Mammary epithelial cell (primary cell): ENCODE measurements at regions of chr12 and their contacts with region 1.

Region 1: DNA sequence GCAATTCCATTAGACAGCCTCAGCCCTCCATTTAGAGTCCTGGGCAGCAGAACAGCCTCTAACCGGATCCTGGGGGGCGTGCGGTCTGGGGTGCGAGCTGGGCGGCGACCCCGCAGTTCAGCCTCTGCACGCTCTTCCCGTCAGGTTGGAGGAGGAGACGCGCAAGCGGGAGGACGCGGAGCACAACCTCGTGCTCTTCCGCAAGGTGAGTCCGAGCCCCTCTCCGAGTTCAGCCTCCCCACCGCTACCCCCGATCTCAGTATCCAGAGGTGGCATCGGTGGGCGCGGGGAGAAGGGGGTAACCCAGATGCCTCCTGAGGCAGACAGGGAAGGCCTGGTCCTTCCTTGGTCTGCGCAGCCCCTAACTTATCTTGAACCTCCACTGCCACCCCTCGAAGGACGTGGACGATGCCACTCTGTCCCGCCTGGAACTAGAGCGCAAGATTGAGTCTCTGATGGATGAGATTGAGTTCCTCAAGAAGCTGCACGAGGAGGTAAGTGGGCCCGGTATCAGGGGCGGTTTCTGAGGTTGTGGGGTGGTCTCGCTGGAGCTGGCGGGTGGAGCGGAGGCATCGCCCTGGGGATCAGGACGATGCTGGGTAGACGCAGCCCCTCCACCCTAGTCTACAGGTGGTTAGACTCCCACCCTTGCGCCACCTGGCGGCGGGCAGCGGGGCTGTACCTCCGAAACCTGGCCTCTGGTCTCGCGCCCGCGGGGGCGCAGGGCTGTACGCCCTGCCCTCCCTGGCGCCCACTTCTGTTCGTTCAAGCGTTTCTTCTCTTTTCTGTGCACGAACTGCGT is 1.3 kb downstream of the PRPH start:
- DNase-seq: no peak
- H3K4me3 ChIP-seq: peak overlapping the region in 2 of 3 experiments; percentile 30 to 41
- H3K27ac ChIP-seq: no peak overlapping the region
- H3K4me1 ChIP-seq: peaks cover 11% of the 10 kb centered on the region
- H3K27me3 ChIP-seq: peaks cover 12% of the 10 kb centered on the region
- CTCF ChIP-seq: peak; percentile 57 to 75

Region 2: GRCh38 chr12:48814262-48815125 is 481.7 kb before region 1 on chr12:
- CTCF ChIA-PET with region 1: no interaction called
- dilution Hi-C with region 1: no loop called
- in situ Hi-C with region 1: no loop called
- intact Hi-C with region 1: no loop called
- DNase-seq: peak; percentile 73
- H3K4me3 ChIP-seq: peak overlapping the region; percentile 77 to 92 (median 92)
- H3K27ac ChIP-seq: peak overlapping the region; percentile 16
- H3K4me1 ChIP-seq: peaks cover 28% of the 10 kb centered on the region
- H3K27me3 ChIP-seq: no peaks in the 10 kb centered on the region
- CTCF ChIP-seq: peak; percentile 95 to 98

Region 3: GRCh38 chr12:49264738-49265515 is 31.3 kb before region 1 on chr12 and contains the start of gene TUBA1C:
- CTCF ChIA-PET with region 1: interaction called, 40 read pairs
- dilution Hi-C with region 1: no loop called
- in situ Hi-C with region 1: no loop called
- intact Hi-C with region 1: loop called (anchors 2 kb)
- DNase-seq: peak; percentile 95
- H3K4me3 ChIP-seq: peak within 1 kb of the TSS; percentile 75 to 99 (median 89)
- H3K27ac ChIP-seq: peak within 1 kb of the TSS; percentile 94
- H3K4me1 ChIP-seq: peaks cover 46% of the 10 kb centered on the region
- H3K27me3 ChIP-seq: no peaks in the 10 kb centered on the region
- CTCF ChIP-seq: no peak
- total RNA-seq, gene TUBA1C: 455 to 532 TPM

Region 4: DNA sequence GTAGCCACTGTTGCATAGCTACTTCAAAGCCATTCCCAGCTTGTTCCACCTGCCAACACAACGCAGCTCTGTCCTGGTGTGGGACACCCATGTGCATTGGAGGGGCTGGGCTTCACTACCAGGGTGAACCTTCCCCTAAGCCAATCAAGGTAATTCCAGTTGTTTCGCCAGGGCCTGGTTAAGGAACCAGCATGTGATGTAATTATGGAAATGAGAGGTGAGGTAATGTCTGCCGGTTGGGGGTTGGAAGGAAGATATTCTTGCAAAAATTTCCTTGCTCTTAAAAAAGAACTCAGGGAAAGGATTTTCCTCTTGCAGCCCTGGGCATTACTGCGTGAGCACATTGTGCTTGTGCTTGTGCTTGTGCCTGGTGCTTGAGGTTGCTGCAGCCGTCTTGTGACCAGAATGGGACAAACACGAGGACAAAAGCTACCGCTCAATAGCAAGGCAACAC is 16.5 kb before region 1 on chr12:
- CTCF ChIA-PET with region 1: interaction called, 4 read pairs
- dilution Hi-C with region 1: no loop called
- in situ Hi-C with region 1: no loop called
- intact Hi-C with region 1: loop called (anchors 1 kb)
- DNase-seq: no peak
- H3K4me3 ChIP-seq: no peak overlapping the region
- H3K27ac ChIP-seq: no peak overlapping the region
- H3K4me1 ChIP-seq: peaks cover 3% of the 10 kb centered on the region
- H3K27me3 ChIP-seq: no peaks in the 10 kb centered on the region
- CTCF ChIP-seq: no peak

Region 5: DNA sequence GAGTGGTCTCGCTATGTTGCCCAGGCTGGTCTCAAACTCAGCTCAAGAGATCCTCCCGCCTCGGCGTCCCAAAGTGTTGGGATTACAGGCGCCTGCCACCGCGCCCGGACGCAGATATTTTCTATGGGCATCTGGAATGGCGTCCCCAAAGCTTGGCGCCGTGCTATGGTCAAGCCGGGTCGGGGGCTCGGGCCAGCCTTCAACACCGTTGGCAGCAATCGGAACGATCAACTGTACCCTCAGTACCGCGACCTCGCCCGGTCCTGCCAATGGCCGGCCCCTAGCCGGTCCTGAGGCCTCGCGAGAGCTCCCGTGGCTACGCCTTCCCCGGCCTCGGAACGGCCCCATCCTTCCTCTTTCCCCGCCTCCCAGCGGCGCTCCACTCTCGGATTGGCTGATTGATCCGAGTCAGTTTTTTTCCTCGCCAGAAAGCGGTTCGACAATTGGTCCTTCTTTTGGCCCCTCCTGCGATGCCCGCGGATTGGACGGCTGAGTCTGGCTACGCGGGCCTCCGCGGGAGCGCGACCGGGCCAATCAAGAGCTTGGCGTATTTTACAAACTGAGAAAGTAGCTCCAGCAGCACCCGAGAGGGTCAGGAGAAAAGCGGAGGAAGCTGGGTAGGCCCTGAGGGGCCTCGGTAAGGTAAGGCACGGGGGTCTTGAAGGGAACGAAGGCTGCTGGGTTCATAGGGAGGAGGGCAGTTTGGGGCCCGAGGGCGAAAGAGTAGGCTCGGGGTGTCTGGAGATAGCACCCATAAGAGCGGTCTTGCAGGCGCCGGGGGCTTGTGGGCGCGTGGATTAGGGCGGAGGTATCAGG is 26.7 kb after region 1 on chr12 and contains the start of gene TROAP:
- CTCF ChIA-PET with region 1: interaction called, 21 read pairs
- dilution Hi-C with region 1: no loop called
- in situ Hi-C with region 1: no loop called
- intact Hi-C with region 1: no loop called
- DNase-seq: peak; percentile 99
- H3K4me3 ChIP-seq: peak within 1 kb of the TSS; percentile 77 to 81 (median 78)
- H3K27ac ChIP-seq: peak within 1 kb of the TSS; percentile 64
- H3K4me1 ChIP-seq: peaks cover 14% of the 10 kb centered on the region
- H3K27me3 ChIP-seq: no peaks in the 10 kb centered on the region
- CTCF ChIP-seq: no peak
- total RNA-seq, gene TROAP: 0.33 to 34.2 TPM

Region 6: DNA sequence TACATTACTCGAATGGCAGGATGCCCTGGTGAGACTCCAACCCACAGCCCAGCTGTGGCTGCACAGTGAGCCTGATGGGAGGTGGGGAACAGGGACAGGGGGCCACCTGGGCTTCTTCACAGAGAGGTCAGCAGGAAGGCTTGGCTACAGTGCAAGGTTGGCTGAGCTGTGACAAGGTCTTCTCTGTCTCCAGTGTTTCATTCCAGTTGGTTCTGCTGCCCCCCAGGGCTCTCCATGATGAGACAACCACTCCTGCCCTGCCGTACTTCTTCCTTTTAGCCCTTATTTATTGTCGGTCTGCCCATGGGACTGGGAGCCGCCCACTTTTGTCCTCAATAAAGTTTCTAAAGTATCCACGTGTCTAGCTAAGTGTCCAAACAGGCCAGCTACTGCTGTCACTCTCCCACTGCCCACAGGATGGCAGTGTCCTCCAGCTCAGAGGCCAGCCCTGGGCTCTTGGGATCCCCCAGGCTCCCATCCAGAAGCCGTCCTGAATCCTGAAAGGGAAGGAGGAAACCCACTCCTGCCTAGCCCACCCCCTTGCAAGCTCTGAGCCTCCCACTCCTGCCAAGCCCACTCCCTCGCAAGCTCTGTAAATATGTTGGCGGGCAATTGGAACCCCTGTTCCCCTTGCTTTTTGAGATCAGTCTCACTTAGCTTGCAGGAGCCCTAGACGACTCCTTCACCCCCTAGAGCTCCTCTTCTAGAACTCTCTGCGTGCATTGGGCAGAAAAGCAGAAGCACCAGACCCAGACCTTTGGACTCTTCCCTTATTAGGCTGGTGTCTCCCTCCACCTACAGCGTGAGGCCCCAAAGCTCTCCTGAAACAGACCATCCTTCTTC is 35.4 kb after region 1 on chr12:
- CTCF ChIA-PET with region 1: interaction called, 16 read pairs
- dilution Hi-C with region 1: no loop called
- in situ Hi-C with region 1: no loop called
- intact Hi-C with region 1: no loop called
- DNase-seq: peak; percentile 37
- H3K4me3 ChIP-seq: no peak overlapping the region
- H3K27ac ChIP-seq: no peak overlapping the region
- H3K4me1 ChIP-seq: peaks cover 4% of the 10 kb centered on the region
- H3K27me3 ChIP-seq: no peaks in the 10 kb centered on the region
- CTCF ChIP-seq: peak; percentile 70 to 92

Region 7: GRCh38 chr12:49336645-49337584 is 40.7 kb after region 1 on chr12 and contains the start of gene C1QL4:
- CTCF ChIA-PET with region 1: interaction called, 16 read pairs
- dilution Hi-C with region 1: no loop called
- in situ Hi-C with region 1: no loop called
- intact Hi-C with region 1: loop called (anchors 1 kb)
- DNase-seq: peak; percentile 50
- H3K4me3 ChIP-seq: peak within 1 kb of the TSS; percentile 41 to 57 (median 46)
- H3K27ac ChIP-seq: no peak within 1 kb of the TSS
- H3K4me1 ChIP-seq: peaks cover 8% of the 10 kb centered on the region
- H3K27me3 ChIP-seq: no peaks in the 10 kb centered on the region
- CTCF ChIP-seq: peak; percentile 51 to 94
- total RNA-seq, gene C1QL4: 0.24 TPM in 1 of 2 donors, not detected in the other

Region 8: DNA sequence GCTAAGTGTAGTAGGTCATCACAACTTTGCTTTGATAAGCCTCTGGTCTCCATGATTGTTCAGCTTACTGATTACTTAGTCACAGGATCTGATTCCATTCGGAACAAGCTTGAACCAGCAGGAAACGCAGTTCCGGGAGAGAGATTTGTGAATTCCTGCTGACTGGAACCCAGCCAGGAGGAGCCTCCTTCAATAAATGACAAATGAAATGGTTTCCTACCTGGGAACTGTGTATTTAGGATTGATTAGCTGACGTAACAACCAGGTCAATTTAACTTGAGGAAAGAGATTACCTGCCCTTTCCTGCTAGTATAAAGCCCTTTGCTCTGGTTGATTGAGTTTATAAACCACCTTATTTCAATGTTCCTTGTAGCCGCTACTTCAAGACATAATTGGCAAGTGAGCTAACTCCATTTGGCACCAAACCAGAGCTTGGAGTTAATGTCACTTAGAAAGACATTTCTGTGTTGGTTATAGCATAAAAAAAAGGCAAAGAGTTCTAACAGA is 207.5 kb after region 1 on chr12:
- CTCF ChIA-PET with region 1: interaction called, 12 read pairs
- dilution Hi-C with region 1: no loop called
- in situ Hi-C with region 1: no loop called
- intact Hi-C with region 1: no loop called
- DNase-seq: peak; percentile 92
- H3K4me3 ChIP-seq: no peak overlapping the region
- H3K27ac ChIP-seq: peak overlapping the region; percentile 82
- H3K4me1 ChIP-seq: peaks cover 35% of the 10 kb centered on the region
- H3K27me3 ChIP-seq: no peaks in the 10 kb centered on the region
- CTCF ChIP-seq: no peak